ENCODE measurements at regions of chr10 and their contacts with region 1.

Region 1: DNA sequence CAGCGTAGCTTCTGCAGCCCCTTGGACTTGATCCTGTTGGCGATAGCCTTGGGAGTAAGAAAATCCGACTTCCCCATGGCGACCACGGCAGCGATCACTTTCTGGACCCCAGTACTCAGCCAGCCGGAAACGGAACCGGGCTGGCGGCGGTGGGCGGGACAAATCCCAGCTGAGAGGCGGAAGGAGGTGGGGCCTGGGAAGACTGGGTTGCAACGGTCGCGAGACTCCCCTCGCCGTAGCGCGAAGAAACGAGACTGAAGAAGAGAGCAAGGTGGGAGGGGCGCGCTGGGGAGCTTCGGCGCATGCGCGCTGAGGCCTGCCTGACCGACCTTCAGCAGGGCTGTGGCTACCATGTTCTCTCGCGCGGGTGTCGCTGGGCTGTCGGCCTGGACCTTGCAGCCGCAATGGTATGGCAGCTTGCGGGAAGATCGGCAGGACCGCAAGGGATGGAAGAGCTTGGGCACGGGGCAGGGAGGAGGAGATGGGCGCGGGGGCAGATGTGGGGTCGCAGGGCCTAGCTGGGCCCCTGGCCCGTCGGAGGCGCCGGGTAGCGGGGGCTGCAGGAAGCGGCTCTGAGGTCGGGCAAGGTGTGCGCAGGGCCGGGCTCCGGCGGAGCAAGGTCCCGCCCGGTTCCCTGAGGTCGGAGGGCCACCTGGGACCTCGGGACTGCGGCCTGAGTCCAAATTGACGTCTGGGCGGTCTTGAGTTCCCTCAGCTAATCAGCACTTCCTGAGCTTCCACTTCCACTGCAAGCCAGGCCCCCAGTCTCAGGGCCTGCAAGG is at the starts of genes ATP5F1C and KIN:
- DNase-seq: peak; percentile 65
- H3K4me3 ChIP-seq: peak within 1 kb of the TSS; percentile 98
- CTCF ChIP-seq: no peak

Region 2: DNA sequence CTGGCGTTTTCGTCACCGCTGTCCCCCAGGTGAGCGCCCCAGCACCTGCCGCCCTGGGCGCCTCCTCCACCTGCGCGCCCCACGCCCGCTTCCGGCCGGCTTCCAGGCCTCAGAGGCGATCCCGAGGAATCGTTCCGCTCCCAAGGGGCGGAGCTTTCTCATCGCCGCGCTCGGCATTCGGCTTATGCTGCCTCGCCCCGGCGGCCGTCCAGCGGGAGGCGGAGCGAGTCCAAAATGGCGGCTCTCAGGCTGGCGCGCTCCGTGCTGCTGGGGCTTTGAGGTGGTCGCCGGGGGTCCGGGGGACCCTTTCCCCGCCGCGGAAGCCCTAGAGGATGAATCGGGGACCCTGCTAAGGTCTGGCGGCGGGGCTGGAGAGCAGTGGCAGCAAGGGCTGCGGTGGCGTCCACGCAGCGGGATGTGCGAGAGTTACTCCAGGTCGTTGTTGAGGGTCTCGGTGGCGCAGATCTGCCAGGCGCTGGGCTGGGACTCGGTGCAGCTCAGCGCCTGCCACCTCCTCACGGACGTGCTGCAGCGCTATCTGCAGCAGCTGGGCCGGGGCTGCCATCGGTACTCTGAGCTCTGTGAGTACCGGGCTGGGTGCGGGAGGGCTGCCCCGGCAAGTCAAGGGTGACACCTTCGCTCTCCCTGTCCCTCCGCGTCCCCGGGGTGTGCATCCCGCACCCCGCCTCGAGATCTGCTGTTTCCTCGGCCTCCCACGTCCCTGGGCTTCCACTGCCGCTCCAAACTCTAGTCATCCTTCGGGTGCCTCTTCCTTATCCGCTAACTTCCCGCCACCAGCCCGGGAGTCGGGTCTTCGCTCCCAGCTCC is 30.5 kb after region 1 on chr10 and contains the start of gene TAF3:
- CTCF ChIA-PET with region 1: interaction called, 7 read pairs
- POLR2A ChIA-PET with region 1: interaction called, 15 read pairs
- DNase-seq: no peak
- H3K4me3 ChIP-seq: peak within 1 kb of the TSS; percentile 94
- CTCF ChIP-seq: no peak

Measured in AG04449 (cell line).